Ovary (tissue), 10 donors: ENCODE measurements at regions of chr1 and their contacts with region 1.

Region 1: GRCh38 chr1:214515544-214516429 is 35.6 kb downstream of the PTPN14 start:
- DNase-seq: no peak
- H3K4me3 ChIP-seq: no peak overlapping the region
- H3K27ac ChIP-seq: peak overlapping the region in 1 of 2 donors; percentile 18
- H3K4me1 ChIP-seq: peaks cover 4% of the 10 kb centered on the region
- H3K27me3 ChIP-seq: no peaks in the 10 kb centered on the region
- CTCF ChIP-seq: no peak
- EP300 ChIP-seq: no peak
- POLR2A ChIP-seq: no peak

Region 2: DNA sequence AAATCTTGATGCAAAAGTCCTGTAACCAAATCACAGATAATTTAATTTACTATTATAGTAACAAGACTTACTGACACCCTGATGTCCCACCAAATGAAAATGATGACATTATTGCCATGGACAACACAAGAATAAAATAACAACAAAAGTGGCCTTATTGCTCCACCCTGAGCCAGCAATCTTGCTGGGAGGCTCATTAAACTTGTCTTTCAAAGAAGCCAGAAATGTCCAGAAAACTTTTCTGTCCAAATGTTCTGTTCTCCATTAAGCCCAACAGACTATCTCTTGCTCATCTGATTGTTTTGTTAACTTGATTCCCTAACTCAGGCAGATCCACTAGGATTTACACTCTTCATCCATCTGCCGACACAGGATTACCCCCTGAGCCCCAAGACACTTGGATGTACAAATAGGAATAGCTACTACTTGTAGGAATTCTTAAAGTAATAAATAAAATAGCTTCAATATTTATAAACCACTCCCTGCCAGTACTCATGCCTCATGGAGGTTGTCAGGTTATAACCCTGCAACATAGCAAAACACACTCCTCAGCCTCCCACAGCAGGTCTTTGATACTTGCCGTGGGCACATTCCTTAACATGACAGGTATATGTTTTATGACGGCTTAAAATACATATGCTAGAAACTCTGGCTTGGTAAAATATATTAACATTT is 49.2 kb before region 1 on chr1:
- intact Hi-C with region 1: no loop called
- DNase-seq: no peak
- H3K4me3 ChIP-seq: no peak overlapping the region
- H3K27ac ChIP-seq: no peak overlapping the region
- H3K4me1 ChIP-seq: peaks cover 1% of the 10 kb centered on the region
- H3K27me3 ChIP-seq: no peaks in the 10 kb centered on the region
- CTCF ChIP-seq: no peak
- EP300 ChIP-seq: no peak
- POLR2A ChIP-seq: no peak

Region 3: DNA sequence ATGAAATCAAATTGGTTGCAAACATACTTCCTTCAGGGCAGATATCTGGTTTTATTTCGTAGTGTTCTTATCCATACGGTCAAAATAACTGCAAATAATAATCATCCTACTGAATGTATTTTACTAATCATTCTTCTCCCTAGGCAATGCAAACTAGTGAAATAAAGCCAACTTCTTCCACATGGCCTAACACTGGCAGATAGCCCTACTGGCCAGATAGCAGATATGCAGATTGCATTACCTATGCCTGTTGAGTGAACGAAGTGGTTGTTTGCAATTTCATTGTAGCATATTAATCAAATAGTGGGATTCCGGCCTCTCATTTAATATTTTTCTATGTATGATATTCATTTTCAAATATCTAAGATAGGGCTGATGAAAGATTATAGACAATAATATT is 203.4 kb after region 1 on chr1:
- intact Hi-C with region 1: loop called in 1 of 4 experiments (anchors 5 kb)
- DNase-seq: no peak
- H3K4me3 ChIP-seq: no peak overlapping the region
- H3K27ac ChIP-seq: no peak overlapping the region
- H3K4me1 ChIP-seq: no peaks in the 10 kb centered on the region
- H3K27me3 ChIP-seq: no peaks in the 10 kb centered on the region
- CTCF ChIP-seq: no peak
- EP300 ChIP-seq: no peak
- POLR2A ChIP-seq: no peak